OCI-LY7 (cell line): ENCODE measurements at regions of chr13 and their contacts with region 1.

Region 1: GRCh38 chr13:33817901-33818706 is at the start of gene RFC3:
- DNase-seq: peak; percentile 97
- H3K4me3 ChIP-seq: peak within 1 kb of the TSS; percentile 98
- H3K27ac ChIP-seq: peak within 1 kb of the TSS; percentile 76
- H3K4me1 ChIP-seq: peaks cover 59% of the 10 kb centered on the region
- CTCF ChIP-seq: peak; percentile 51; the same call in 1 of the 2 replicates
- total RNA-seq, gene RFC3: 97.6 and 108 TPM in 2 replicates

Region 2: DNA sequence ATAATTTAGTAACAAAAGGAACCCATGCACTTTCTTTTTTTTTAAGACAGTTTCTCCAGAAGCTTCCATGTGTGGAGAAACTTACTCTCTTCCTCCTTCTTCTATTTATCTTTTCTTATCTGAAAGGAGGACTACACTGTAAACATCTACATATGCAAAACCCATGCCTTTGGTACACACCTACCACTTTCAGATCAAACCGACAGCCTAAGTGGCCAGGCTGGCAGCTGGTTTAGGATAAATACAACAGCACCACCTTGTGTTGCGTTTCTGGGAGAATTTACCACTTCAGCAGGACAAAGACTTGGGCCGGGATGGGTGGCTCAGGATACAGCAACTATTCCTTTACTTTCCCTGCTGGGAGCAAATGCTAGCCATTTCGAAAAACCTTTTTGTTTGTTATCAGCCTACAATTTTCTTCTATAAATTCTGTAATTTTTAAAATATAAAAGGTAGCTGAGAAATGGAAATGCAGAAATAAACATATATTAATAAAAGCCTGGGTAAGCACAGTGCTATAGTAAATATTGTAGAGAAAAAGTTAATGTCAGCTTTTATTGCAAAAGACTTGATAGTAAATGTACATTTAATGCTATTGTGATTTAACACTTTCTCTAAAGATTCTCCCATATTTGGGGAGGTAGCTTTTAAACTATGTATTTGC is 94.2 kb before region 1 on chr13:
- CTCF ChIA-PET with region 1: interaction called, 3 read pairs
- POLR2A ChIA-PET with region 1: interaction called, 7 read pairs
- intact Hi-C with region 1: loop called (anchors 5 kb)
- DNase-seq: peak; percentile 91
- H3K4me3 ChIP-seq: no peak overlapping the region
- H3K27ac ChIP-seq: peak overlapping the region; percentile 24
- H3K4me1 ChIP-seq: peaks cover 54% of the 10 kb centered on the region
- CTCF ChIP-seq: peak; percentile 91

Region 3: DNA sequence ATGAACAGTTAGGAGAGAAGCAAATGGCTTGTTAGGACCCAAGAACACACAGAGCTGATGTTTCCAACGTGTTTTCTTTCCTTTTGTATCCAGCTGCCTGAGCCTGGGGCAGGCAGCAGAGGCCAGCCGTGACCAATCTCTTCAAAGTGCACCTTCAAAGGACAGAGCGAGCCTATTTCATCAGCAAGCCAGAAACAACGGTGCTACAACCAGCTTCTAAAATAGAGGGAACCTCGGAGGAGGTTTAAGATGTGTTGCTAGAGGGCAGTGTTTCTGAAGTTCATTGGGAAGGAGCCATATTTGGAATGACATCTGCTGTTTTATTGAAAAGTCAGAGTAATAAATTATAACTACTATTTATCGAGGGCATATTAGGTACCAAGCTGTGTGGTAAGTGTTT is 56.4 kb before region 1 on chr13:
- CTCF ChIA-PET with region 1: no interaction called
- POLR2A ChIA-PET with region 1: interaction called, 6 read pairs
- intact Hi-C with region 1: loop called (anchors 5 kb)
- DNase-seq: peak; percentile 57
- H3K4me3 ChIP-seq: no peak overlapping the region
- H3K27ac ChIP-seq: peak overlapping the region; percentile 47
- H3K4me1 ChIP-seq: peaks cover 27% of the 10 kb centered on the region
- CTCF ChIP-seq: peak; percentile 66

Region 4: DNA sequence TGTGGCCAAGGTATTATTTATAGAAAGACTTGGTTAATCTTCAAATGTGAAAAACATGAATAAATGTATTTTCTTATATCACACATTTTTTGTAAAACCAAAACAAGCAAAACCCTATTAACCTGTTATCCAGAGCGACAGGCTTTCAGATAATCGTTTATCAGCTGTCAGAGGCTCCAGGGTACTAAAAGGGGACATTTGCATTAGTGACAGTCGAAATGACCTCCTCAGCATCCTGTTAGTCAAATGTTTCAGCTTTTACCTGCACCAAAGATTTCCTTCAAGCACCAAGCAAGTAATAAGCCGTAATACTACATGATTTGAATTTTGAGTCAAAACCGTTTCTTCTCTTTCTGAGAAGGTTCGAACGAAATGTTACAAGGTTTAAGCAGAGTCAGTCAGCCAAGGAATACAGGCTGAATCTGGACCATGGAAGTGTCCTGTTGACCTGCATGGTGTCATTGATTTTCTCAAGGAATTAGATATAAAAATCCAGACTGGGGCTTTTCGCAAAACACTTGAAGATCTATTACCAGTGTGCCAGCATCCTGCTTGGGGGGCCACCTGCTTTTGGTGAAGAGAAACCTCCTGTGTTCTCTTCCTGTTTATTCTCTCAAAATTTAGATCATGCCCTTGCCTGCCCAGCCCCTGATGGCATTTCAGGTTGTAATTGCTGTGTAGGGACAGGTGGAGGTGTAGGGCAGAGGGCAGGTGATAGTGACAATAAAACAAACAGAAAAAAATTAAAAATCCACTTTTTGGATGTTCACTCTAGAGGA is 11.4 kb before region 1 on chr13:
- CTCF ChIA-PET with region 1: no interaction called
- POLR2A ChIA-PET with region 1: interaction called, 30 read pairs
- intact Hi-C with region 1: loop called (anchors 1 kb)
- DNase-seq: peak; percentile 79
- H3K4me3 ChIP-seq: peak overlapping the region; percentile 60
- H3K27ac ChIP-seq: peak overlapping the region; percentile 90
- H3K4me1 ChIP-seq: peaks cover 46% of the 10 kb centered on the region
- CTCF ChIP-seq: 0 out of 2 replicates have a peak, but pooled peaks have one; percentile 19

Region 5: GRCh38 chr13:33842207-33842606 is 24.1 kb after region 1 on chr13:
- CTCF ChIA-PET with region 1: no interaction called
- POLR2A ChIA-PET with region 1: interaction called, 10 read pairs
- intact Hi-C with region 1: no loop called
- DNase-seq: no peak
- H3K4me3 ChIP-seq: no peak overlapping the region
- H3K27ac ChIP-seq: no peak overlapping the region
- H3K4me1 ChIP-seq: no peaks in the 10 kb centered on the region
- CTCF ChIP-seq: no peak

Region 6: GRCh38 chr13:33918199-33918932 is 100.3 kb after region 1 on chr13:
- CTCF ChIA-PET with region 1: no interaction called
- POLR2A ChIA-PET with region 1: no interaction called
- intact Hi-C with region 1: no loop called
- DNase-seq: no peak
- H3K4me3 ChIP-seq: no peak overlapping the region
- H3K27ac ChIP-seq: no peak overlapping the region
- H3K4me1 ChIP-seq: no peaks in the 10 kb centered on the region
- CTCF ChIP-seq: no peak

Region 7: DNA sequence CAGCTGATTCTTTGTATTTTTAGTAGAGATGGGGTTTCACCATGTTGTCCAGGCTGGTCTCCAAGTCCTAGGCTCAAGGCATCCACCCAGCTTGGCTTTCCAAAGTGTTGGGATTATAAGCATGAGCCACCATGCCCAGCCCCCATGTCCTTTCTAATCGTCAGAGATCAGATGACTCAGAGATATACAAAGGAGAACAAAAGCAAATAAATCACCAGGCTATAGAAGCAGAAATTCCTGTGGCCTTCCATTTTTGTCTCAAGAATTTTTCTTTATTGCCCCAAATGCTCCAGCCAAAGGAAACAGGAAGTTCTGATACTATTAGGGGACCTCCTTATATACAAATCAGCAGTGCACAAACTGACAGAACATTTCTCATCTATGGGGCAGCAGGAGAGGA is 207.6 kb after region 1 on chr13:
- CTCF ChIA-PET with region 1: no interaction called
- POLR2A ChIA-PET with region 1: no interaction called
- intact Hi-C with region 1: no loop called
- DNase-seq: no peak
- H3K4me3 ChIP-seq: no peak overlapping the region
- H3K27ac ChIP-seq: no peak overlapping the region
- H3K4me1 ChIP-seq: peaks cover 4% of the 10 kb centered on the region
- CTCF ChIP-seq: no peak